ENCODE measurements at regions of chr1 and their contacts with region 1.

Region 1: DNA sequence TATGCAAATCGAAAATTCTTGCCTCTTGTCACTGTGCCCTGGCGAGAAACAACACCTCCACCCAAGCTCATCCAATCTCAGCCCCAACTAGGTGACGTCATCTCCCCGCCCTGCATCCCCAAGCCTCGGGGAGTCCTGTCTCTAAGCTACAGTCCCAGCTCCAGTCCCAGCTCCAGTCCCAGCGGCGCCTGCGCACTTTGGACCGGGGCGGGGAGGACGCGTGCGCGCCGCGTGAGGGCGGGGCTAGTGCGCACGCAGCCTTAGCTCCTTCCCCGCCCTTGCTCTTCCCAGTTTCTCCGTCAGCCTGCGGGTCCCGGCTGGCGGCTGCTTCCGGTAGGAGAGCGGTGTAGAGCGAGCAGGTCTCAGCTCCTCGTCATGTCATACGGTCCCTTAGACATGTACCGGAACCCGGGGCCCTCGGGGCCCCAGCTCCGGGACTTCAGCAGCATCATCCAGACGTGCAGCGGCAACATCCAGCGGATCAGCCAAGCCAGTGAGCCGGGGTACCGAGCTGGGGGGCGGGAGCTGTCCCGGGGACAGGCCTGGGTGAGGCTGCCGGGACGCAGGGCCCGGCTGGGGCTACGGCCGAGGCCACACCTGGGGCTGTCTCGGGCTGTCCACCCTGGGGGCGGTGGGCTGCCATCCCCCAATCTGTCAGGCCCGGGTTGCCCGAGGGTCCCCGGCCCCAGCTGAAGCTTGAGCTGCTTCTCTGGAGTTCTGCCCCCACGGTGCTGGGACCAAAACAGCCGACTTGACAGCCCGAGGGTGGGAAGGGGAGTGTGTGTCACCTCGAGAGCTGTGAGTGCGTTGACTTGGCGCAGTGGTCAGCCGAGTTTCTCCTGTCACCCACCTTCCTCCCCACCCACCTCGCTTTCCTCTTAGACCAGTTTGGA is at the start of gene STX12:
- DNase-seq: peak; percentile 97
- ATAC-seq: peak; percentile 93
- H3K4me3 Mint-ChIP-seq: peak within 1 kb of the TSS; percentile 93
- H3K27ac Mint-ChIP-seq: peak within 1 kb of the TSS; percentile 98
- H3K4me1 Mint-ChIP-seq: peaks cover 37% of the 10 kb centered on the region
- H3K27me3 Mint-ChIP-seq: no peaks in the 10 kb centered on the region
- CTCF ChIP-seq: no peak
- total RNA-seq, gene STX12: 33.5 and 42.4 TPM in 2 replicates

Region 2: GRCh38 chr1:27643701-27644625 is 129.2 kb before region 1 on chr1:
- CTCF ChIA-PET with region 1: no interaction called
- POLR2A ChIA-PET with region 1: interaction called, 10 read pairs
- intact Hi-C with region 1: no loop called
- DNase-seq: peak; percentile 53
- ATAC-seq: peak; percentile 99
- H3K4me3 Mint-ChIP-seq: no peak overlapping the region
- H3K27ac Mint-ChIP-seq: peak overlapping the region; percentile 46
- H3K4me1 Mint-ChIP-seq: peaks cover 15% of the 10 kb centered on the region
- H3K27me3 Mint-ChIP-seq: no peaks in the 10 kb centered on the region
- CTCF ChIP-seq: no peak

Region 3: DNA sequence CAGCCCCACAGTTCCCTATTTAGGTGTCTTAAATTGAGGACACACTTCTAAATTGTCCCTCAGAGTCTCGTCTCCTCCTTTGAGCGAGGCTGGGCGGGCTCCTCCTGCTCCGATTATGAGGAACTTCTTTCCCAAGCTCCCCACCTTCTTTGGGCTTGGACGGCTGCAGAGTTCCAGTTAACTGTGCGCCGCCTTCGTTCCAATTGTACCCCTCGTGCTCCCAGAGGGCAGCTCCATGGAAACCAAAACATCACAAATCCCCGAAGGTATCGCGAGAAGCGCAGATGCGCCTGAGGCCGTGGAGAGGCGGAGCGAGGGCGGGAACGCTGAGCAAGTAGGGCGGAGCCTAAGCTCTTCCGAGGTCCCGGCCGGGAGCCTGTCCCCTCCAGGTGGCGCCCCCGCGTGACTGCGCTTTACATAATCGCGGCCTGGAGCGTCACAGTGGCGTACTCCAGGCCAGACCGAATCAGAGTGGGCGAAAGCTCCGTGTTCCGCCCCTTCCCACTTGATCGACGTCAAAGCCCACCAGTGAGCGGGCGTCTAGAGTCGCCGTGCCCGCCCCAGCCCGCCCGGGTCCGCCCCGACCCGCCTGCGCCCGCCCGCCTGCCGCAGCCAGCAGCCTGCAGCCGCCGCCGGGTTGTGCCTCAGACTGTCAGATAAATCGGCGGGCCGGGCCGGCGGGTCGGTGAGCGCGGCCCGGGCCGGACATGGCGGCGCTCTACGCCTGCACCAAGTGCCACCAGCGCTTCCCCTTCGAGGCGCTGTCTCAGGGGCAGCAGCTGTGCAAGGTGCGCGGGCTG is 47.6 kb before region 1 on chr1 and contains the start of gene FAM76A:
- CTCF ChIA-PET with region 1: interaction called, 3 read pairs
- POLR2A ChIA-PET with region 1: interaction called, 42 read pairs
- intact Hi-C with region 1: loop called (anchors 1 kb)
- DNase-seq: peak; percentile 98
- ATAC-seq: peak; percentile 93
- H3K4me3 Mint-ChIP-seq: peak within 1 kb of the TSS; percentile 88
- H3K27ac Mint-ChIP-seq: peak within 1 kb of the TSS; percentile 97
- H3K4me1 Mint-ChIP-seq: peaks cover 26% of the 10 kb centered on the region
- H3K27me3 Mint-ChIP-seq: no peaks in the 10 kb centered on the region
- CTCF ChIP-seq: no peak
- total RNA-seq, gene FAM76A: 14.9 and 19.3 TPM in 2 replicates

Region 4: GRCh38 chr1:27807385-27807784 is 34.2 kb after region 1 on chr1:
- CTCF ChIA-PET with region 1: no interaction called
- POLR2A ChIA-PET with region 1: no interaction called
- intact Hi-C with region 1: no loop called
- DNase-seq: no peak
- ATAC-seq: no peak
- H3K4me3 Mint-ChIP-seq: no peak overlapping the region
- H3K27ac Mint-ChIP-seq: no peak overlapping the region
- H3K4me1 Mint-ChIP-seq: no peaks in the 10 kb centered on the region
- H3K27me3 Mint-ChIP-seq: no peaks in the 10 kb centered on the region
- CTCF ChIP-seq: no peak

Region 5: DNA sequence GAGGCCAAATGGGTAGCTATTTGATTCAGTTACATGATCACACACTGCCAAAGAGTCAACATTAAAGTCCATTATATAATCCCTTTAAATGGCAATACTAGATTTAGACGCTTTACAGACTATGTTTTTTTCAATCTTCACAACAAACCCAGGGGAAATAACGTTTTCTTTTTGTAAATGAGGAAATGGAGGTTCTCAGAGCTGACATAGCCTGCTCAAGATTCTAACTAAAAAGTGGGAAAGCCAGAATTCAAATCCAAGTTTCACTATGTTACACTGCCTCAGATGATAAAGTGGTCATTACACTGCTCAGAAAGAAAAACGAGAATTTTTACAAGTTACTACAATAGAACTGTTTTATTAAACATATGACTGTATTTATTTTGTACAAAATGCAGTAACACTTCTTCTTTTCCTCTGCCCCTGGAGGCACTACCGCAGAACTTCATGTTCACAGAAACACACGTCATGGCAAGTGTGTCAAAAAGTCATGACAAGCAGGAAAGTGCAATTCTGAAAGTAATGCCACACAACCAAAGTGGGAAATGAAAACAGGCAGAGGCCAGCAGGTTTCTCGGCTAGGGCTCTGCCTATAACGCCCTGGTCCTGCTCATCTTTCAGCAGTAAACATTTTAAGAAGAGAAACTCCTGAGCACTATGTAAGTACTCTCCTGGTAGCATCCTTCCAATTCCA is 118.2 kb after region 1 on chr1:
- CTCF ChIA-PET with region 1: no interaction called
- POLR2A ChIA-PET with region 1: no interaction called
- intact Hi-C with region 1: loop called (anchors 1 kb)
- DNase-seq: no peak
- ATAC-seq: peak; percentile 76
- H3K4me3 Mint-ChIP-seq: peak overlapping the region; percentile 50
- H3K27ac Mint-ChIP-seq: peak overlapping the region; percentile 89
- H3K4me1 Mint-ChIP-seq: peaks cover 57% of the 10 kb centered on the region
- H3K27me3 Mint-ChIP-seq: no peaks in the 10 kb centered on the region
- CTCF ChIP-seq: no peak

Region 6: GRCh38 chr1:27906759-27907158 is 133.6 kb after region 1 on chr1:
- CTCF ChIA-PET with region 1: no interaction called
- POLR2A ChIA-PET with region 1: no interaction called
- intact Hi-C with region 1: no loop called
- DNase-seq: no peak
- ATAC-seq: no peak
- H3K4me3 Mint-ChIP-seq: no peak overlapping the region
- H3K27ac Mint-ChIP-seq: no peak overlapping the region
- H3K4me1 Mint-ChIP-seq: peaks cover 2% of the 10 kb centered on the region
- H3K27me3 Mint-ChIP-seq: no peaks in the 10 kb centered on the region
- CTCF ChIP-seq: no peak